Left colon (tissue), 2 donors: ENCODE measurements at regions of chr13 and their contacts with region 1.

Region 1: GRCh38 chr13:98484289-98485219 is 92.4 kb downstream of the STK24 start:
- DNase-seq: peak; percentile 73 to 93
- ATAC-seq: peak; percentile 85

Region 2: DNA sequence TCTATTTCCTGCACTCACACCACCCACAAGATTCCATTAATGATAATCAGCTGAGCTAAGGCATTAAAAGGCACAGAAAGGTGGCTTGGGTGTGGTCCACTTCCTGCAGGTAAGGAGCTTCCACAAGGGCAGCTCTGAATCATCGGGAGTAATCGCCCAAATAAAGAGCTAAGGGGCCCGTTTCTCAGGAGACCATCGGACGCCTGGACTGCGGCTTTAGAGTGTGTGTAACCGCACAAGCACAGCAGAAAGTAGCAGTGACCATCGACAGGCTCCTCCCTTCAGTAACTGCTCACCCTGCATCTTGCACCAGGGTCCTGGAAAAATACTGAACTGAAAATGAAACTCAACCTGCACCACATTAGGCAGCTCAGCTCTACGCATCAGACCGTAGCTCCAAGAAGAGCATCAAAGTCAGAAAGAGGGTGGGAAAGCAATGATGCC is 86.4 kb after region 1 on chr13:
- intact Hi-C with region 1: loop called in 1 of 2 experiments (anchors 5 kb)
- DNase-seq: peak; percentile 59 to 62
- ATAC-seq: peak; percentile 40

Region 3: GRCh38 chr13:98731925-98732324 is 247.4 kb after region 1 on chr13:
- intact Hi-C with region 1: no loop called
- DNase-seq: no peak
- ATAC-seq: peak; percentile 99